ENCODE measurements at regions of chr2 and their contacts with region 1.

Region 1: DNA sequence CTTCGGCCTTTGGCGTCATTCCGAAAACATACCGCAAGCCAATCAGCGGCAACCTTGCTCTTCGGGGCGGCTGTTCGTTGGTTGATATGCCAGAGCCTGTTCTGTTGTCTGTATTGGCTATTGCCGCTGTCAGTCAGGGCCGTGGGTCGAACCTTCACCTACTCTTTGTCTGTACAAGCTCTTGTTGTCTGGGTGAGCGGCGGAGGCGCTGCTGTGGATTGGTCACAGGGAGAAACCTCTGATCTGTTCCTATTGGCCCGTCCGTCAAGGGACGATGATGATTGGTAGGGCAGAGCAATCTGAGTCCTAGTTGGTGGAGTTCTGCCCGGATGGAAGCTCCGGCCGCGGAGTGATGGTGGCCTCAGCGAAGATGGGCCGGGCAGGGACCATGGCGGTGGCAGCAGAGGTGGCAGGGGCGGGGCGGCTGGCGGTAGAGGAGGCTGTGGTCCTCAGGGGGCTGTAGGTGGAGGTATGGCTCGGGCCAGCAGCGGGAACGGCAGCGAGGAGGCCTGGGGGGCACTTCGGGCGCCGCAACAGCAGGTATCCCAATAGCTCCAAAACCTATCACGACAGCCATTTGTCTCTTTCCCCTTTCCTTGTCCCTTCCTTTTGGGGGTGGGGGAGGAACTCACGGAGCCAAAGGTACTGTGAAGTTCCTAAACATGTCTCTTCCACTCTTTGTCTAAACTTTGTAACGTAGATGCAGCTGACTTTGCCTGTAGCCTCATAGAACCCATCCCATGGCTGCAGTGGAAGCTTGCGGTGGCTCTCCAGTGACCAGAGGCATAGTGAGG is at the start of gene WBP1:
- DNase-seq: peak; percentile 99 to 100 (median 100)
- ATAC-seq: peak; percentile 93 to 96 (median 95)
- H3K4me3 ChIP-seq: peak within 1 kb of the TSS; percentile 52 to 83 (median 70)
- H3K27ac ChIP-seq: peak within 1 kb of the TSS; percentile 84 to 98 (median 95)
- H3K4me1 ChIP-seq: peaks cover 5 to 40% (median 32%) of the 10 kb centered on the region in 12 donors
- H3K27me3 ChIP-seq: no peaks in the 10 kb centered on the region
- CTCF ChIP-seq: no peak
- POLR2A ChIP-seq: peak in 1 of 2 donors; percentile 61
- total RNA-seq, gene WBP1: 32.7 to 58.4 (median 42.4) TPM

Region 2: DNA sequence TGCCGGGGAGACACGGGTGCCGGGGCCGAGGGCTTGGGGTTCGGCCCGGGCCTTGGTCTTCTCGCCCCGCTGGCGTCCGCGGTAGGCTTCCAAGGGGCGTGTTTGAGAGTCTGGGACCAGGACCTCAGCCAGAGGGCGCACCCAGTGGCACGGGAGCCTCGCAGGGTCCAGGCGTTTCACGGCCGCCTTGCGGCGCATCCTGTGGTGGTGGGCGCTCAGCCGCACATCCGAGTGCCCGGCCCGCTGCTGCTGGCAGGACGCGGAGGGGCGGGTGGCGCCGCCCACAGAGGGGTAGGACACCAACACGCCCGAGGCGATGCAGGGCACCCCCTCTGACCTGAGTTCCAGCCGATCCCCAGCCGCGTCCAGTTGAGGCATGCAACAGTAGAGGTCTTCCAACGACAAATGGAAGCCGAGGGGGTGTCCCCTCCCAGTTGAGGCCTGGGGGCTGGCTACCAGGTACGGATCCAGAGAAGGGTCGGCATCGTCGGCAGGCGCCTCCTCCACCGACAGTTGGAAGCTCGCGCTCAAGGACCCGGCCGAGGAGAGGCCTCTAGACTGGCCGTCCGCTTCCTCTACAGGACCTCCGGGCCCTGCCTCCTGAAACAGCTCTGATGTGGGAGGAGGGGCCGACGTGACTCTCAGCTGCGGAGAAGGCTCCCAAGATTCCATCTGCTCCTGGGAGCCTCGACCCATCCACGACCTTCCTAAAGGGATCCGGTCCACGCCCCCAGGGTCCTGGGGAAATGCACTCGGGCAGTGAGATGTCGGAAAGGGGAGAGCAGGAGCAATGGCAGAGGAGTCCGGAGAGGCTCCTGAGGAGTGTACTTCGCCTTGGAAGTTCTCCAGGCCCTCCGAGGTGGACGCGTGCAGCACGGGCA is 43.2 kb before region 1 on chr2:
- intact Hi-C with region 1: loop called in 1 of 10 experiments (anchors 5 kb)
- DNase-seq: peak; percentile 66 to 80 (median 69)
- ATAC-seq: peak; percentile 51 to 81 (median 76)
- H3K4me3 ChIP-seq: peak overlapping the region; percentile 42 to 77 (median 65)
- H3K27ac ChIP-seq: peak overlapping the region in 11 of 12 donors; percentile 36 to 83 (median 58)
- H3K4me1 ChIP-seq: peaks cover 0 to 43% (median 20%) of the 10 kb centered on the region in 12 donors
- H3K27me3 ChIP-seq: no peaks in the 10 kb centered on the region
- CTCF ChIP-seq: peak; percentile 23 to 69 (median 48)
- POLR2A ChIP-seq: no peak

Region 3: DNA sequence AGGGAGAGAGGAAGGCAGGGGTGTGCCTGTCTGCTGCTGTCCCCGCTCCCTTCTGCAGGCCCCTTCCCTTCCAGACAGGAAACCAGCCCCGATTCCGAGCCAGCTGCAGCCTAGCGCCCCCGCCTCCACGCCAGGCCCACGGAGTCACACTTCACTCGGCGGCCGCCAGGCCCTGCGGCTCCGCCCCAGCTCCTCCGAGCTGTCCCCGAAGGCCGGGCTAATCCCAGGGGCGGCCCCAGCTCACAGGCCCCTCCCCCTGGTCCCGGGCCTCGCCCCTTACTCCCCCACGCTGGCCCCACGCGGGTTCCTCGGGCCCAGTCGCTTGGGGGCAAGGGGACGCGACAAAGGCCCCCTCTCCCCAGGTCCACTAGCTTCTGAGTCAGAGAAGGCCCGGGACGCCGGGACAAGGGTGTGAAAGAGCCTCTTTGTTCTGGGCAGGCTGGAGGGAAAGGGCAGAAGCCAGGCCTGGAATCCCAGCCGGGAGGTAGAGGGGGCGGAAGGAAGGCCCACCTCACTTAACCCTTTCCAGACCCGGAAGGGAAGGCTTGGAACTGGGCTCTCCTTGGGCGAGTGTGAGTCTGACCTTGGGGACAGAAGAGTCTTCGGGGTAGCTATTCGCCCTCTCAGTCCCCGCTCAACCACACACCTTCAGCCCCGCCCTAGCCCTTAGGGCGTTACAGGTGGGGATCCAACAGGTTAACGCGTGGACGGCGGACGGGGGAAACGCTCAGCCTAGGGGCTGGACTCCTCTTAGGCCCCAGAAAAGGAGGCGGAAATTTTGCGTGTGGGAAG is 17.8 kb before region 1 on chr2:
- intact Hi-C with region 1: loop called in 2 of 10 experiments (anchors 1 to 2 kb)
- DNase-seq: peak; percentile 91 to 94 (median 93)
- ATAC-seq: peak; percentile 90 to 95 (median 93)
- H3K4me3 ChIP-seq: peak overlapping the region; percentile 30 to 72 (median 60)
- H3K27ac ChIP-seq: peak overlapping the region; percentile 77 to 95 (median 86)
- H3K4me1 ChIP-seq: peaks cover 0 to 63% (median 37%) of the 10 kb centered on the region in 12 donors
- H3K27me3 ChIP-seq: peaks cover 0 to 39% (median 0%) of the 10 kb centered on the region in 9 donors
- CTCF ChIP-seq: peak in 9 of 12 donors; percentile 11 to 52 (median 29)
- POLR2A ChIP-seq: peak in 1 of 2 donors; percentile 68

Region 4: DNA sequence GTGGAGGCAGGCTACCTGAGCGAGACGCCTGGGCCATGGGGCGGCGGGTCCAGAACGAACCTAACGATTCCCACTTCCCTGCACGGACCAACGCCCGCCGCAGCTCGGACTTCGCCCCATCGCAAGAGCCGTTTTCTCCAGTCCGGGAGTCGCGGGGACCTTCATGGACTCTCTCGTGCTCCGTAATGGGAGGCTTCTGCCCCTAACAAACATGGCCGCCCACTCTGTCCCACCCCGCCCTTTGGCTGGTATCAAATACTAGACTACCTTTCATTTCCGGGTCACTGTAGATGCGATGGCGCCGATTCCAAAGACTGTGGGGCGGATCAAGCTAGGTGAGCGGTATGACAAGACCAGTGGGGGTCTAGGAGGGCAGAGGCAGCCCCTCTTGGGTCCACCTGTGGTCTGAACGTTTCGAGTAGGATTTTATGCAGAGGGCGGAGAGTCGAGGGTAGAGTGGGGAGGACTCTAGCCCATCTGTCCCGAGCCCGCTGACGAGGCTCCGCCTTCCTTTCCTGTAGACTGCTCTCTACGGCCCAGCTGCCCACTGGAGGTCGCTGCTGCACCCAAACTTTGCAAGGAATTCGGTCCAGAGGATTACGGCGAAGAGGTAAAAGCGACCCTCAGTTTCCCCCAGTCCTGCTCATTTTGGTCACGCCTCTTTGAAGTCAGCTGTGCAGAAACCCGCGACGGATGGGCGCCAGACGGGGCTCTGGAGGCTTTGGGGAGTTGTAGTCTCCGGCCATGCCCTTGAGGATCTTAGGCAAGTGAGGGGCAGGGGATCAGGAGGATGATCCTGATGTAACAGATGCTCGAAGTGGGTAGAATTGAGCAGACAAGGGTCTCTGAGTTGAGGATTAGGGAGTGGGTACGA is 24.7 kb after region 1 on chr2 and contains the starts of genes CCDC142 and TTC31:
- intact Hi-C with region 1: loop called in 5 of 10 experiments (anchors 1 to 2 kb)
- DNase-seq: peak; percentile 96 to 97 (median 97)
- ATAC-seq: peak; percentile 98 to 99 (median 98)
- H3K4me3 ChIP-seq: peak within 1 kb of the TSS; percentile 71 to 98 (median 88)
- H3K27ac ChIP-seq: peak within 1 kb of the TSS; percentile 73 to 97 (median 92)
- H3K4me1 ChIP-seq: peaks cover 5 to 31% (median 25%) of the 10 kb centered on the region in 12 donors
- H3K27me3 ChIP-seq: no peaks in the 10 kb centered on the region
- CTCF ChIP-seq: peak; percentile 77 to 97 (median 88)
- POLR2A ChIP-seq: peak in 1 of 2 donors; percentile 37
- total RNA-seq, gene CCDC142: 4.4 to 13.4 (median 7.1) TPM
- total RNA-seq, gene TTC31: 7.1 to 14.2 (median 10.0) TPM